SK-N-SH (cell line): ENCODE measurements at regions of chr1 and their contacts with region 1.

Region 1: GRCh38 chr1:241895013-241895412 is 47.0 kb downstream of the EXO1 start:
- DNase-seq: no peak
- H3K4me3 ChIP-seq: no peak overlapping the region
- H3K27ac ChIP-seq: no peak overlapping the region
- H3K4me1 ChIP-seq: peaks cover 0 to 5% of the 10 kb centered on the region in 2 experiments; a peak in 1 of 4 replicates
- H3K27me3 ChIP-seq: no peaks in the 10 kb centered on the region
- CTCF ChIP-seq: no peak
- EP300 ChIP-seq: no peak
- RAD21 ChIP-seq: no peak

Region 2: GRCh38 chr1:241716915-241717656 is 177.9 kb before region 1 on chr1:
- CTCF ChIA-PET with region 1: no interaction called
- POLR2A ChIA-PET with region 1: no interaction called
- DNase-seq: no peak
- H3K4me3 ChIP-seq: no peak overlapping the region
- H3K27ac ChIP-seq: no peak overlapping the region
- H3K4me1 ChIP-seq: no peaks in the 10 kb centered on the region
- H3K27me3 ChIP-seq: no peaks in the 10 kb centered on the region
- CTCF ChIP-seq: no peak
- EP300 ChIP-seq: no peak
- RAD21 ChIP-seq: no peak

Region 3: DNA sequence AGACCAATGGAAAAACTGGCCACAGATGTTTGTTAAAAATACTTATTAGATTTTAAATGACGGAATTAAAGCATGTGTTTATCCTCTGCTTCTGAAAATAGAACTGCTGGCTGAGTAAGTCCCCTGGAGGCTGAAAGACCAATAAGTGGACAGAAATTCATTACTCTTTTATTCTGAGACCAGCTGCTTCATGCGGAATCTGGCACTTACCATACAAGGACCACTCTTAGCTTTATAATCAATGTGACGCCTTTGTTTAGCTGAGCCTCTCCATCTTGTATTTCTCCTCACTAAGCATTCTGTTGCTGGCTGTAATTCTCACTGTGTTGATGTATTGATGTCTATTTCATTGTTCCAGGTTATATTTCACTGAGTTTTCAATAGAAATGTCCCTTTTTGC is 53.3 kb before region 1 on chr1:
- CTCF ChIA-PET with region 1: no interaction called
- POLR2A ChIA-PET with region 1: no interaction called
- DNase-seq: no peak
- H3K4me3 ChIP-seq: no peak overlapping the region
- H3K27ac ChIP-seq: no peak overlapping the region
- H3K4me1 ChIP-seq: no peaks in the 10 kb centered on the region
- H3K27me3 ChIP-seq: no peaks in the 10 kb centered on the region
- CTCF ChIP-seq: no peak
- EP300 ChIP-seq: no peak
- RAD21 ChIP-seq: no peak

Region 4: GRCh38 chr1:241972703-241973369 is 77.8 kb after region 1 on chr1:
- CTCF ChIA-PET with region 1: interaction called, 10 read pairs
- POLR2A ChIA-PET with region 1: no interaction called
- DNase-seq: peak; percentile 64
- H3K4me3 ChIP-seq: no peak overlapping the region
- H3K27ac ChIP-seq: no peak overlapping the region
- H3K4me1 ChIP-seq: peaks cover 5% of the 10 kb centered on the region in 2 experiments; a peak in 1 of 4 replicates
- H3K27me3 ChIP-seq: no peaks in the 10 kb centered on the region
- CTCF ChIP-seq: no peak
- EP300 ChIP-seq: no peak
- RAD21 ChIP-seq: no peak

Region 5: DNA sequence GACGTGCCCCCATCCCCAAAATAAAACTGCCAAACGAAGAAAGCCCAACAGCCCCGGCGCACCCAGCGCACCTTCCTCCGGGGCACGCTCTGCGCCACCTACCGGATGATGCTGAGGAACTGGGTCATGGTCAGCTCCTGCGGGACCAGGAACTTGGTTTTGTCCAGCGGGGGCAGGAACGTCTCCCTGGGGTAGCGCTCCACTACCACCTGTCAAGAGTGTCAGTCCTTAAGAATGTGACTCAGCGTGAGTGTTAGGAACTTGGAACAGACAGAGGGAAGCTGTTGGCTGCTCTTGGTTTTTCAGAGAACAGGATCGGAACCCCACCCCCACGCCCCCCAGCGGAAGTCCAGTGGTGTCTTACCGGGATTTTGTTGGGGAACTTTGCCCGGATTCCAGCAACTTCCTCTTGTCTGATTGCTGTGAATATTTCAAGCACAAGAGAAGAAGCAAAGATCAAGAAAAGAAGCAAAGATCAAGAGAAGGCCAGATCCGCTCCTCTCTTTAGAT is 103.5 kb after region 1 on chr1:
- CTCF ChIA-PET with region 1: interaction called, 15 read pairs
- POLR2A ChIA-PET with region 1: no interaction called
- DNase-seq: no peak
- H3K4me3 ChIP-seq: peak overlapping the region in 1 of 2 experiments; percentile 44; a peak in 1 of 4 replicates
- H3K27ac ChIP-seq: no peak overlapping the region
- H3K4me1 ChIP-seq: peaks cover 0 to 4% of the 10 kb centered on the region in 2 experiments; a peak in 1 of 4 replicates
- H3K27me3 ChIP-seq: no peaks in the 10 kb centered on the region
- CTCF ChIP-seq: peak; percentile 47
- EP300 ChIP-seq: no peak
- RAD21 ChIP-seq: no peak

Region 6: GRCh38 chr1:242005866-242006565 is 111.0 kb after region 1 on chr1:
- CTCF ChIA-PET with region 1: interaction called, 18 read pairs
- POLR2A ChIA-PET with region 1: no interaction called
- DNase-seq: no peak
- H3K4me3 ChIP-seq: no peak overlapping the region
- H3K27ac ChIP-seq: peak overlapping the region in 1 of 2 experiments; percentile 25; a peak in 1 of 4 replicates
- H3K4me1 ChIP-seq: peaks cover 0 to 2% of the 10 kb centered on the region in 2 experiments; a peak in 1 of 4 replicates
- H3K27me3 ChIP-seq: no peaks in the 10 kb centered on the region
- CTCF ChIP-seq: no peak
- EP300 ChIP-seq: peak in 1 of 2 experiments; percentile 67; a peak in 2 of 4 replicates
- RAD21 ChIP-seq: no peak

Region 7: GRCh38 chr1:242017584-242018233 is 122.7 kb after region 1 on chr1:
- CTCF ChIA-PET with region 1: interaction called, 36 read pairs
- POLR2A ChIA-PET with region 1: no interaction called
- DNase-seq: peak; percentile 81
- H3K4me3 ChIP-seq: peak overlapping the region in 1 of 2 experiments; percentile 11; a peak in 1 of 4 replicates
- H3K27ac ChIP-seq: no peak overlapping the region
- H3K4me1 ChIP-seq: no peaks in the 10 kb centered on the region
- H3K27me3 ChIP-seq: no peaks in the 10 kb centered on the region
- CTCF ChIP-seq: peak; percentile 76
- EP300 ChIP-seq: no peak
- RAD21 ChIP-seq: peak; percentile 83

Region 8: GRCh38 chr1:242023805-242024204 is 128.8 kb after region 1 on chr1:
- CTCF ChIA-PET with region 1: interaction called, 36 read pairs
- POLR2A ChIA-PET with region 1: no interaction called
- DNase-seq: no peak
- H3K4me3 ChIP-seq: no peak overlapping the region
- H3K27ac ChIP-seq: no peak overlapping the region
- H3K4me1 ChIP-seq: no peaks in the 10 kb centered on the region
- H3K27me3 ChIP-seq: no peaks in the 10 kb centered on the region
- CTCF ChIP-seq: no peak
- EP300 ChIP-seq: no peak
- RAD21 ChIP-seq: no peak

Region 9: GRCh38 chr1:242043165-242043564 is 148.2 kb after region 1 on chr1:
- CTCF ChIA-PET with region 1: no interaction called
- POLR2A ChIA-PET with region 1: no interaction called
- DNase-seq: no peak
- H3K4me3 ChIP-seq: no peak overlapping the region
- H3K27ac ChIP-seq: no peak overlapping the region
- H3K4me1 ChIP-seq: no peaks in the 10 kb centered on the region
- H3K27me3 ChIP-seq: no peaks in the 10 kb centered on the region
- CTCF ChIP-seq: no peak
- EP300 ChIP-seq: no peak
- RAD21 ChIP-seq: no peak